Right ventricle myocardium superior (tissue), 1 donor: ENCODE measurements at regions of chr11 and their contacts with region 1.

Region 1: DNA sequence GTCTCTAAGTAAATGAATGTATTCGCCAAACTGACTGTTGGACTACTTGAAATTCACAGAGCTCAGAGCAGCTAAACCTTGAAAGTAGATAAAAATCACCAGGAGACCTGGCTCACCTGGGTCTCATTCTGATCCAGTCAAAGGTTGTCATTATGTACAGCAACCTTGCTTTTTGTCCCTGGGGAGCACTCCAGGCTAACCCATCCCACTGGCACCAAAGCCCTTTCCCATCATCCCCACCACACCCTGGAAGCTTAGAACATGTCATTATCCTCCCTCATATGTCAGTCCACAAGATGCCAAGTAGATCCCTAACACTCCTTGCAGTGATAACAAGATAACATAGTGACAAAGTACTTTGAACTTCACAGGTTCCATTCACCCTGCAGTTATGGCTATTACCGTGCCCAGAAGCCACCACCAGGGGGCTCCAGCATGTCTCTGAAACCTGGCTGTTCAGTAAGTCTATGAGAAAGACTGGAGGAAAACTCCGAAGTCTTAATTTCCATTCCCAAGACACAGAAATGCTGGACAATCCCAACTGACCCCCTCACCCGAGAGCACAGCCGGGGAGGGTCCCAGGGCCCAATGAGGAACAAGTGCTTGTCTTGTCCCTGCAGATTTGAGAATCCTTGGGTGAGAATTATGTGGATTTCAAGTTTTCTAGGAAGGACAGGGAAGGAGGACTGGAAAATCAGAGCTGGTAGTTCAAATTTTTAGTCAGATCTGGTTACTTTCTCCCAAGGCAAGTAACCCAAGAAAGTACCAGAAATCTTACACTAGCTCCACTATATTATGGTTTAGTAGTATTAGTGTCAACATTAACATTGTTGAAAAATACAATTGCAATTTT is 43.0 kb upstream of the USP47 start:
- DNase-seq: peak; percentile 92
- ATAC-seq: peak; percentile 95

Region 2: DNA sequence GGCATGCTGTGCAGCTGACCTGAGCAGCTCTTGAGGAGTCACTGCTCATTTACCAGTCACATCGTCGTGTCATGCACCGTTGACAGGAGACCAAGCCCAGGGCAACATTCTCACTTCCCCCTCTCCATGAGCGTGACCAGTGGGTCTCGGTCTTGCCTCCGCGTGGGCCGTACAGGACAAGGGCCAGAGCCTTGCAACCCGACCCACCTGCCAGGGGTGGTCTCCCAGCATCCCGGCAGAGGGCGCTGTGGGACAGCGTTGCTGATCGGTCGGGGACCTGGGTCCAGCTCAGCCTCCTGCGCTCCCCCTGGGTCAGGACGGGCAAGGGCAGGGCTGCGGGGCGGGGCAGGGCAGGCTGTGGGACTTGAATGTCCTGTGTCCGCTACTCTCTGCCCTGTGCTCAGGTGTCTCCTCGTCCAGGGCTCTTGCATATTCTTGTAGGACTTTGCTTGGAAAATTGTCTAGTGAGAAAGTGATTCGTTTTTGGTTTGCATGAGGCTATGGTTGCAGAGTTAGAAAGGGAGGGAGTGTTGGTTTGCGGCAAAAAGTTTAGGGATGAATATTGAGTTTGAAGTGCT is 1006.3 kb before region 1 on chr11:
- intact Hi-C with region 1: loop called (anchors 10 kb)
- DNase-seq: peak; percentile 93
- ATAC-seq: peak; percentile 95

Region 3: DNA sequence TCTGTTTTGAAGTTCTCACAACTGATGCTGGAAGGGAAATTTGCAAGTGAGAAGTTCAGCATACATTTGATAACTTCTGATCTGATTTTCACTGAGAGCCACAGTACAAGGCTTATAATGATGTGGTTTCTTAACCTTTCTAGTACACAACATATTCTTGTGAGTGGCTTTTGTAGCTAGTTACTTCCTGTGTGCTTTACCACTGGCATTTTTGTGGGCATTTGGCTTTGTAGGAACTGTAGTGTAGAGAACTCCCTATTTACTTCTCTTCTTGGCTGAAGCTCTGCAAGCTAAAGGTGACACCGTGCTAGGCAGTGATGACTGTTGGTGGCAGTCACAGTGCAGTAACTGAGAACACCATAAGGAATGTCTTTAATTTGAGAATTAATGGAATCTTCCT is 57.8 kb after region 1 on chr11:
- intact Hi-C with region 1: no loop called
- DNase-seq: no peak
- ATAC-seq: peak; percentile 59

Region 4: GRCh38 chr11:11895672-11896071 is 96.9 kb after region 1 on chr11:
- intact Hi-C with region 1: loop called (anchors 10 kb)
- DNase-seq: no peak
- ATAC-seq: no peak